Cardiac septum (tissue), 1 donor: ENCODE measurements at regions of chr2 and their contacts with region 1.

Region 1: GRCh38 chr2:196798980-196799379 is 503 bp downstream of the GTF3C3 start:
- DNase-seq: no peak

Region 2: GRCh38 chr2:196607073-196607472 is 191.9 kb before region 1 on chr2:
- intact Hi-C with region 1: no loop called
- DNase-seq: no peak

Region 3: DNA sequence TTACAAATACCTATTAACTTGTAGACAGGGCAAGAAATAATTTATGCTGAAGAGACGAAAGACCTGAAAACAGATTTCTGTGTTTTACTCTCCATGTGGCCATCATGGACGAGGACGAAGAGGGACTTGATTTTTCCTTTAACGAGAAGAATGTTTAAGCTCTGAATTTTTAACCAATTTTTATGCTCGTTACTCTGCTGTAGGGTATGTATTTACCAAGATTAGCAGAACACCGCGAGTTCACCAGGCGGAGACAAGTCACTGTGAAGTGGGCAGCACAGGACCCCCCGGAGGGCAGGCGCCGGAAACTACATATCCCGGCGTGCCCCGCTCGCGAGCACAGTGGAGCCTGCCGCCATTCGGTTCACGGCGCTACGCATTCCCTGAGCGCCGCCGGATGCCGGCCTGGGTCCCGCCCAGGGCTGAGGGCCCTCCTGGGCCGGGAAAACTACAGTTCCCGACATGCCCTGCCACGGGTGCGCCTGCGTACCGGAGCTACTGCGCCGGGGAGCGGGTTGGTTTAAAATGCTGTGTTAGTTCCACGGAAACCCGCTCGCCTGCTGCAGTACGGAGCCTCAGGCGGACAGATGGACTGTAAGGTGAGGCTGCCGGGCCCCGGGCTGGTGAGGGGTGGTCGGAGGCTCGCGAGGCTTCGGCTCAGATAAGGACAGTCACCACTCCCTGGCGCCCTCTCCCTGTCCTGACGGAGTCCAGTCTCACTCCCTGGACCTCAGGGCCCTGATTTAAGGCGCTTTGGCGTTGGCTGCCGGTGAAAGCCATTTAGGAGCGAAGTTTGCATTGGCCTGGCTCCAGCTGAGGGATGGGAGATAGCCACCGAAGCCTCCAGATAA is 159.6 kb before region 1 on chr2 and contains the start of gene CCDC150:
- intact Hi-C with region 1: loop called (anchors 5 kb)
- DNase-seq: peak; percentile 94
- total RNA-seq, gene CCDC150: 1.5 TPM

Region 4: GRCh38 chr2:196926562-196927375 is 127.8 kb after region 1 on chr2 and contains the start of gene PGAP1:
- intact Hi-C with region 1: loop called (anchors 2 kb)
- DNase-seq: peak; percentile 96
- total RNA-seq, gene PGAP1: 7.7 TPM